Activated CD4-positive, alpha-beta memory T cell treated with anti-CD3 and anti-CD28 coated beads for 36 hours (primary cell): ENCODE measurements at regions of chr10 and their contacts with region 1.

Region 1: DNA sequence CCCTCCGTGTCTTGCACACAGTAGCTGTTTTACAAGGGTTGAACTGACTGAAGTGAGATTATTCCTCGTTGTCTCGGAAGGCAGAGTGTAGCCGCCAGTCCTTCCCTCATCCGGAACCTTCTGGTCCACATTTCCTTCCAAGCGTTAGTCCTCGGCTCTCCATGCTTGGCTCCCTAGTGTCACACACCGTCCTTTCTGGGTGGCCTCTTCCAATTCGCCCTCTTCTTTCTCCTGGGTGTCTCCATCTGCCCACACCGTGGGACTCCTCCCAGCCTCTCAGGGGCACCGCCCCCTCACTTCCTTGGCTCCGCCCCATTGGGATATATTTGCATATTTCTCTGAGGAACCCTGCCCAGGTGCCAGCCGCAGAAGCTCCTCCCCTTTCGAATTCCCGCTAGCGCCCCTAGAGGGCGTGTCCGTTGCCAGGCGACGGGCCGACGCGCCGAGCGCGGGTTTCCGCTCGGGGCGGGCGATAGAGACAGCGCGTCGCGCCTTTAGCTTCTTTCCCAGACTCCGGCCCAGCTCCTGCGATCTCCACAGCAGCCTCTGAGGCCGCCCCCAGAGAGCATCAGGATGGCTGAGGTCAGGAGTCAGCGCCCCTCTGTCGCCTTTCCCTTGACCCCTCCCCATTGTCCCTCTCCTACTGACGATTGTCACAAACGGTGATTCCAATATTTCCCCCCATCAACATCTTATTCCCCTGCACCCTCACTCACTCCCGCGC is at the start of gene CFAP58:
- DNase-seq: peak; percentile 94
- H3K4me3 Mint-ChIP-seq: peak within 1 kb of the TSS; percentile 10
- H3K27ac Mint-ChIP-seq: peak within 1 kb of the TSS; percentile 29
- H3K4me1 Mint-ChIP-seq: no peaks in the 10 kb centered on the region
- H3K27me3 Mint-ChIP-seq: no peaks in the 10 kb centered on the region
- total RNA-seq, gene CFAP58: 0.31 to 0.88 TPM

Region 2: DNA sequence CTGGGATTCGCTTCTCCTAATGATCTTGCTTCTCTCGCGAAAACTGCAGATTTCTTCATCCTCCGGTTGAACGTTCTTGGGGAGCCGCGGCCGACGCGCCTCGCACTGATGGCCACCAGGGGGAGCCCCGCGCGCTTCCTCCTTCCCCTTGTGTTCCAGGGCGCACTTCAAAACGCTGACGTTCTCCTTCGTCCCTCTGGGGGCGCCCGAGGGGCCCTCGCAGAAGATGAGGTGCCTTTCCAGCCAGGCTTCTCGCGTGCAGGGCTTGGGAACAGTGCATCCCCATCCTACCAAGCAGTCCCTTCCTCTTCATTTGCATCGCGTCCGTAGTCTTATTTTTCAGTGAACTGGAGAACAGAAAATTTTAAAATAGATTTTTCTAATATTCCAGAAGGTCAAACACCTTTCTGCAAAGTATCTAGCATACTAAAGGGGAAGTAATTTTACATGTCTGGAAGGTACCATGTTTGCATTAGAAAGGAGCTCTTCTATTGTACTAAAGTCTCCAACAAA is 62.0 kb before region 1 on chr10:
- CTCF ChIA-PET with region 1: interaction called, 240 read pairs
- POLR2A ChIA-PET with region 1: interaction called, 7 read pairs
- intact Hi-C with region 1: loop called (anchors 1 kb)
- DNase-seq: peak; percentile 92
- H3K4me3 Mint-ChIP-seq: peak overlapping the region; percentile 39
- H3K27ac Mint-ChIP-seq: no peak overlapping the region
- H3K4me1 Mint-ChIP-seq: peaks cover 12% of the 10 kb centered on the region
- H3K27me3 Mint-ChIP-seq: peaks cover 23% of the 10 kb centered on the region

Region 3: DNA sequence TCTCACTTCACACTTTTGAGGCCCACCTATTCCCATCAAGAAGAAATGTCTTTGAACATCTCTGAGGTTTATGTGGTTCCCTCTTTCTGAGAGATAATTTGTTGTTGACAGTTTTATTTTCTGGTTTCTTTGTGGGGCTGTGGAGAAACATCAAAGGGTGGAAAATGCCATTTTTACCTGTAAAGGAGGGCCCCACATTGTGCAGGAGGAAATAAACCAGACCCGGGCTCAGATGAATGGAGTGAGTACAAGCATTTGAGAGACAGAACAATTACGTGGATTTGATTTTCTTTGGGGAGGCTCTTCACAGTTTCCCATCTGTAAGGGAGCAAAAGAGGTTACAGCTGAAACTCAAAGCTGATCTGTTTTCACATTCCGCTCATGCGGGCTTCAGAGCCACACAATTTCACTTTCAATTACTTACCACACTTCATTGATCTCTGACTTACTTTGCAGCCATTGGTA is 45.0 kb before region 1 on chr10:
- CTCF ChIA-PET with region 1: interaction called, 186 read pairs
- POLR2A ChIA-PET with region 1: interaction called, 13 read pairs
- intact Hi-C with region 1: loop called (anchors 1 kb)
- DNase-seq: peak; percentile 54
- H3K4me3 Mint-ChIP-seq: no peak overlapping the region
- H3K27ac Mint-ChIP-seq: peak overlapping the region; percentile 44
- H3K4me1 Mint-ChIP-seq: peaks cover 49% of the 10 kb centered on the region
- H3K27me3 Mint-ChIP-seq: peaks cover 5% of the 10 kb centered on the region

Region 4: DNA sequence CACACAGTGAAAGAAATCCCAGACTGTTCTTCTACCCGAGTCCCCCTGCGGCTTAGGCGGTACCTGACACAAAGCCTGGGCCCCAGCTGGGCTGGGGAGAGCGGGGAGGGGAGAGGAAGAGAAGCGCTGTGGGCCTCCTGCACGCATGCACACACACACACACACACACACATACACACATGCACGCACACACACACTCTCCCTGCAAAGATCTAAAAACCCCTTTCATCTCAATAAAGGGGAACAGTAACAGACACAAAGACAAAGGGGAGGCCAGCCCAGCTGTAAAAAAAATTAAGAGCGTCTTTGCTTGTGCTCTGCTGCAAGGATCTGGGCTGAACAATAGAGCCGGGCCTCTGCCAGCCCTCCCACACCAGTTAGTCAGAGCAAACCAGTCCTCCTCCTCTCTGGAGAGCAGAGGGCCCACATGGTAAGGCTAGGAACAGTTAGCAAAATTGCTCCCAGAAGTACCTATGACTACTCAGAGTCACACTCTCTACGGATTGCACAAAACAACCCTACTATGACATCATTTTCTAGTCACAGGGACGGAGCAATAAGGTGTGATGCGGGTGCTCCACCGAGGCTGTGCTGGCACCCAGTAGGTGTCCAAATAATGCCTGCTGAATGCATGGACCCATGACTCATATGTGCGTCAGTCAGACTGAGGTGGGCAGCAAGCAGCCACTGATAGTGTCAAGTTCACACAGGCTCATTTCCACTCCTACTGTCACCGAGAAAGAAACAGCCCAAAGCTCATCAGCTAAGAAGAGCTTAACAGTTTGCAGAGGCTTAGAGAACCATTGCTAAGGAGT is 24.4 kb before region 1 on chr10:
- CTCF ChIA-PET with region 1: interaction called, 24 read pairs
- POLR2A ChIA-PET with region 1: no interaction called
- intact Hi-C with region 1: loop called (anchors 1 kb)
- DNase-seq: peak; percentile 92
- H3K4me3 Mint-ChIP-seq: peak overlapping the region; percentile 60
- H3K27ac Mint-ChIP-seq: peak overlapping the region; percentile 91
- H3K4me1 Mint-ChIP-seq: peaks cover 96% of the 10 kb centered on the region
- H3K27me3 Mint-ChIP-seq: no peaks in the 10 kb centered on the region